ENCODE measurements at regions of chr2 and their contacts with region 1.

Region 1: GRCh38 chr2:25072606-25073005 is 30.7 kb downstream of the EFR3B start:
- DNase-seq: no peak

Region 2: DNA sequence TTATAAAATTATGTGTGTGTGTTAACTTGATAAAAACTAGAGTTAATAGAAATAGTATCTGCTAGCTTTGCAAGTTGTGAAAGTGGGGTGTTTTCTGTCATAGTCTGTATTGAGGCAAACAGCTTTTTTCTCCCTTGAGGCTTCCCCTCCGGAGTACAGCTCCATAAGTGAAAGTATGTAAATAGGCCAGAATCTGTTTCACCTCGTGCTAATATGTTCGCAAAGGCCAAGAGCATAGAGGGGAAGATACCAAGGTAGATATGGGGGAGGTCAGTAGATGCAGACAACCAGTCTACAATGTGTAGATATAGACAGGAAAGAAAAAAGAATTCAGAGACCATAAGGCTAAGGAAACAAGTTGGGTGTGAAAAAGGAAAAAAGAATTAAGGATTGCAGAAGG is 352.3 kb before region 1 on chr2:
- intact Hi-C with region 1: no loop called
- DNase-seq: no peak

Region 3: DNA sequence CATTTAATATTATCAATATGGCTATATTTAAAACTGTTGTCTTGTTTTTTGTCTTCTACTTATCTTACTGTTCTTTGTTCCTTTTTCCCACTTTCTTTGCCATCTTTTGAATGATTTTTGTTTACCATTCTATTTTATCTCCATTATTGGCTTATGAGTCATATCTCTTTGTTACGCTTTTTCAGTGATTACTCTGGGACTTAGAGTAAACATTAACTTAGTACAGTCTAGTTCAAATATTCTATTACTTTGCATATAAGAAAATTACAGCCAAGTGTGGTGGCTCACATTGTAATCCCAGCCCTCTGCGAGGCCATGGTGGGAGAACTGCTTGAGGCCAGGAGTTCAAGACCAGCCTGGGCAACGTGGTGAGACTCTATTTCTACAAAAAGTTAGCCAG is 178.7 kb before region 1 on chr2:
- intact Hi-C with region 1: no loop called
- DNase-seq: no peak

Region 4: DNA sequence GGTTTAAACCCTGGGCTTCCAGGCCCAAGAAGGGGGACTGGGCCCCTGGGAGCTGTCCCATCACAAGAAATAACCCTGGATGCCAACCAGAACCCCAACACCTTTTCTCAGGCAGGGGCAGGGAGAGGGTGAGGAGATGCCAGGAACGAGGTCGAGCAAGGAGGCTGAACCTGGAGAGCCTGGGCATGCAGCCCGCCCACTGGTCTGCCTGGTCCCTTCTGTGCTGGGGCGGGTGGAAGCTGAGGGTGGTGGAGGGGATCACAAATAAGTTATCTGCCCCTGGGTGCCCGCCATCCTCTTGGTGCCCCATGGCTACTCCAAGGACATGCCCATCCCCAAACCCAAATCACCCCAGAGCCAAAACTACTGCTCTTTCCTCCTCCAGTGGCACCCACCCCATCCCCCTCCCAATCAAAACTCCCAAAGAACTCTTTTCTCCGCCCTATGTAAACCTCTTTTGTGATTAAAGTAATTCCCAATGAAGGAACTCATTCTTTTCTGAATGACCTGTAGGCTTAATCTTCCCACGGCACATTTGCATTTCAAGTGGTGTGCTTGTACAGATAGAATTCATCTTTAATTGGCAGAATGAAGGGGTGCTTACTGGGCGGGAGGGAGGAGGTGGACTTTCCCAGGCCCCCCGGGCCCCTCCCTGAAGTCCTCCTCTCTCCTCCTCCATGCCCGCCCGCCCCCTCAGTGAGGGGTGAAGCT is 17.2 kb after region 1 on chr2:
- intact Hi-C with region 1: loop called in 1 of 2 experiments (anchors 1 kb)
- DNase-seq: no peak

Measured in posterior vena cava (tissue), 2 donors.